Colonic mucosa (tissue), 4 donors: ENCODE measurements at regions of chr2 and their contacts with region 1.

Region 1: GRCh38 chr2:24228470-24228869 is 53.6 kb downstream of the FAM228A start:
- DNase-seq: no peak
- H3K4me3 ChIP-seq: no peak overlapping the region
- H3K27ac ChIP-seq: no peak overlapping the region
- H3K4me1 ChIP-seq: no peaks in the 10 kb centered on the region
- H3K27me3 ChIP-seq: no peaks in the 10 kb centered on the region
- CTCF ChIP-seq: no peak

Region 2: GRCh38 chr2:24374301-24374700 is 145.8 kb after region 1 on chr2:
- intact Hi-C with region 1: no loop called
- DNase-seq: no peak
- H3K4me3 ChIP-seq: no peak overlapping the region
- H3K27ac ChIP-seq: no peak overlapping the region
- H3K4me1 ChIP-seq: no peaks in the 10 kb centered on the region
- H3K27me3 ChIP-seq: no peaks in the 10 kb centered on the region
- CTCF ChIP-seq: no peak

Region 3: GRCh38 chr2:24385366-24385765 is 156.9 kb after region 1 on chr2:
- intact Hi-C with region 1: loop called (anchors 5 kb)
- DNase-seq: no peak
- H3K4me3 ChIP-seq: no peak overlapping the region
- H3K27ac ChIP-seq: no peak overlapping the region
- H3K4me1 ChIP-seq: no peaks in the 10 kb centered on the region
- H3K27me3 ChIP-seq: no peaks in the 10 kb centered on the region
- CTCF ChIP-seq: no peak